Right ventricle myocardium superior (tissue), 1 donor: ENCODE measurements at regions of chr17 and their contacts with region 1.

Region 1: DNA sequence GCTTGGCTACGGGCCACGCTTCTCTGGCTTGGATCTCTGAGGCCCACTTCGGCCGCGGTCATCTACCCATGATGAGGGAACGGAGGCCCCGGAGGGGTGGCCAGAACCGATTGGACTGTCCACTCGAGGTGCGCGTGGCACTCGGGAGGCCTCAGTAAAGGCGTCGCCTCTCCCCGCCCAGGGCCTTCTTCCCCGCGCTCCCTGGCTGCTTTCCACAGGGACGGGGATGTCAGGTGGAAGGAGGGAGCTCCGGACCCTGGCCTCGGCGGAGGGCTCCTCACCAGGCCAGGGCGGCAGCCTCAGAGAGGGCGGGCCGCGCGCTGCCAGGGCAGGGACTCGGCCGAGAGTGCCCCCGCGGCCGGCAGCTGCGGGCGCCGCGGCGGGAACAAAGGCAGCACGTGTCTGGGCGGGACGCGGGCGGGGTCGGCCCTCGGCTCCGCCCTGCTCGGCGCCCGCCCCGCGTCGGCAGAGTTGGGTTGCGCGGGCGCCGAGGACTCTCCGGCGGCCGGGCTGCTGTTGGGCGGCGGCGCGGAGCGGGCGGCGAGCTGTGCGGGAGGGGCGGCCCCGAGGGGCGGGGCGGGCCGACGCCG is 587 bp upstream of the CDK5R1 start:
- DNase-seq: peak; percentile 81
- ATAC-seq: peak; percentile 84

Region 2: GRCh38 chr17:32341857-32342602 is 144.2 kb before region 1 on chr17 and contains the start of gene C17orf75:
- intact Hi-C with region 1: no loop called
- DNase-seq: peak; percentile 87
- ATAC-seq: peak; percentile 96
- total RNA-seq, gene C17orf75: 18.3 TPM

Region 3: DNA sequence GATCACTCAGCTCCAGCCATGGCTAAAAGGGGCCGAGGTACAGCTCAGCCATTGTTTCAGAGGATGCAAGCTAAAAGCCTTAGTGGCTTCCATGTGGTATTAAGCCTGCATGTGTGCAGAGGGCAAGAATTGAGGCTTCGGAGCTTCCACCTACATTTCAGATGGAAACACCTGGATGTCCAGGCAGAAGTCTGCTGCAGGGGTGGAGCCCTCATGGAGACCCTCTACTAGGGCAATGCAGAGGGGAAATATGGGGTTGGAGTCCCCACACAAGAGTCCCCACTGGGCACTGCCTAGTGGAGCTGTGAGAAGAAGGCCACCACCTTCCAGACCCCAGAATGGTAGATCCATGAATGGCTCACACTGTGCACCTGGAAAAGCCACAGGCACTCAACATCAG is 56.6 kb before region 1 on chr17:
- intact Hi-C with region 1: no loop called
- DNase-seq: no peak
- ATAC-seq: no peak

Region 4: GRCh38 chr17:32609085-32609484 is 122.9 kb after region 1 on chr17:
- intact Hi-C with region 1: loop called (anchors 5 kb)
- DNase-seq: peak; percentile 77
- ATAC-seq: peak; percentile 89

Region 5: DNA sequence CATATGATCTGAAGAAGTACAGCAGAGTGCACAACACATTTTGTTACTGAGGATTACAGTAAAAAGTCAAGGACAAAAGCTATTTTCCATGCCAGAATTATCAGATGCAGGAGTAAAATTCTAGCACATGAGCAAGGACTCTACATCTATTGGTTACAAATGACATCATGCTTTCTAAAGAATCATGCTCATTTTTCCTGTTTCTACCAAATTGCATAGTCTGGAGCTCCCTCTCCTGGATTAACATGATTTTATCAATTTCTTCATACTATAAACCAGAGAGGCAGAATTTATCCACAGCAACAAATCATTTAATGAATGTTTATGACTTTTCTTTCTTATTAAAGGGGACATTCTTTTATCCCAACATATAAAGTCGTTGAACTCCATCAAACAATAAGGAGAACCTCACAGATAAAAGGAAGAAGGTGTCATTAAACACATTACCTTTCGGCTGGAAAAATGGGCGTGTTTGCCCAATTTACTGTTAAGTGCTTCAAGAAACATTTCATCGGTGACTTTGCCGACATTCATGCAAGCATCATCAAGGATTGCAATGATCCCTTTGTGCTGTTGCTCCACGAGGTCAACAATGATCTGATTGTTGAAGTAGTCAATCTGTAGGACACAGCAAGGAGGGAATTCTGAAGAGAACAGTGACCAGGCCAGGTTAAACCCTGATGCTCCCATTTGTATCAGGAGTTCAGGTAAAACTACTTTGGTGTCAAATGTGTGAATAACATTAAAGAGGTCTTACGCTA is 269.0 kb after region 1 on chr17:
- intact Hi-C with region 1: loop called (anchors 10 kb)
- DNase-seq: no peak
- ATAC-seq: peak; percentile 71